Right ventricle myocardium superior (tissue), 1 donor: ENCODE measurements at regions of chr9 and their contacts with region 1.

Region 1: DNA sequence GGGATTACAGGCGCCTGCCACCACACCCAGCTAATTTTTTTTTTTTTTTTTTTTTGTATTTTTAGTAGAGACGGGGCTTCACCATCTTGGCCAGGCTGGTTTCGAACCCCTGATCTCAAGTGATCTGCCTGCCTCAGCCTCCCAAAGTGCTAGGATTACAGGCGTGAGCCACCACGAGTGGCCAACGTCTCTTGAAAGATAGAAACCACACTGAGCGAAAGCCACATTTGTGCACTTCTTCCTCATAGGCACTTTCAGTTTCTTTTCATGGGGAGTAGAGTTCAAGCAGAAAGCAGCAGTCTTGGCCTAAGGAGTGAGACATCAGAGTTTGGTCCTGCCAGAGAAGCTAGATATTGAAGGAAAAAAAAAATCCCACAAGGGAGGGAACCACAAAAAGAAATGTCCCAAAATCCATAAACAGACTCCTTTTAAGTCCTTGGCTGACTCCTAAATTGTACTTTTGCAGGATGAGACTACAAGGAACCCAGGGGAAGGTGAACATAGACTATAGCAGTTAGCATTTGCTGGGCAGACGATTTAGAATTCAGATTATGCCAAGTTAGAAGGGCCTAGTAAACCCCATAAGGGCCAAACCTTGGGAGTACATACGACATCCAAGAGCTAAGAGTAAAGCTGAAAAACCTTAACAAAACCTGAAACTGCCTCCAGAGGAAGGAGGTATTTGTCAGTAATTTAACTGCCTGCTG is 43.9 kb upstream of the GLIPR2 start:
- DNase-seq: no peak
- ATAC-seq: peak; percentile 51

Region 2: DNA sequence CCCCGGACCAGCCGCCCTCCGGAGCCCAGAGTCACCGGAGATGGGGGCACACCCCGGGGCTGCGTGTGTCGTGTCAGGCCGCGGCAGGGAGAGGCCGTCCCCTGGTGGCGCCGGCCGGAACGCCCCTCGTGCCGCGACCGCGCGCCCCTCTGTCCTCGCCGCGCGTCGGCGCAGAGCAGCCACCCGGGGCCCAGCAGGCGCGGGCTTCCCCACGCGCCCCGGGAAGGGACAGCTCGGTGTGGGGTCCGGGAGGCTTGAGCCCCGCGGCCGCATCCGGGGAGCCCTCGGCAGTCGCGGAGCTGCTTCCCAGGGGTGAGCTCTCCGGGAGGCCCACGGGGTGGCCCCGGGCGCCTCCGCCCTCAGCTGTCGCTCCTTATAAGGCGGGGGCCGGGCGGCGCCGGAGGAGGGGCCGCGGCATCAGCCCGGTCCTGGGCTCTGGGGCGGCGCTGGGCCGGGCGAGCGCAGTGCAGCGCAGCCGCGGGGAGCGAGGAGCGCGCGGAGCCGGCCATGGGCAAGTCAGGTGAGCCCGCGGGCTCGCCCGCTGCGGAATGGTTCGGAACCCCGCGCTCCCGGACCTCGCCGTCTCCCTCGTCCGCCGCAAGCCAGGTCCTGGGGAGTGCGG is 43.7 kb after region 1 on chr9 and contains the start of gene GLIPR2:
- intact Hi-C with region 1: no loop called
- DNase-seq: peak; percentile 90
- ATAC-seq: peak; percentile 97
- total RNA-seq, gene GLIPR2: 6.7 TPM

Region 3: GRCh38 chr9:36337865-36338264 is 245.2 kb after region 1 on chr9:
- intact Hi-C with region 1: loop called (anchors 10 kb)
- DNase-seq: no peak
- ATAC-seq: peak; percentile 96